ENCODE measurements at regions of chr10 and their contacts with region 1.

Region 1: GRCh38 chr10:67779465-67780203 is 58.4 kb downstream of the DNAJC12 start:
- DNase-seq: peak; percentile 73
- H3K4me3 ChIP-seq: no peak overlapping the region
- H3K27ac ChIP-seq: no peak overlapping the region
- H3K27me3 ChIP-seq: no peaks in the 10 kb centered on the region
- CTCF ChIP-seq: peak; percentile 82

Region 2: GRCh38 chr10:67306588-67307205 is 472.9 kb before region 1 on chr10:
- CTCF ChIA-PET with region 1: interaction called, 10 read pairs
- POLR2A ChIA-PET with region 1: no interaction called
- DNase-seq: no peak
- H3K4me3 ChIP-seq: no peak overlapping the region
- H3K27ac ChIP-seq: no peak overlapping the region
- H3K27me3 ChIP-seq: no peaks in the 10 kb centered on the region
- CTCF ChIP-seq: peak; percentile 64

Region 3: GRCh38 chr10:67327626-67328535 is 451.8 kb before region 1 on chr10:
- CTCF ChIA-PET with region 1: interaction called, 13 read pairs
- POLR2A ChIA-PET with region 1: no interaction called
- DNase-seq: no peak
- H3K4me3 ChIP-seq: no peak overlapping the region
- H3K27ac ChIP-seq: no peak overlapping the region
- H3K27me3 ChIP-seq: no peaks in the 10 kb centered on the region
- CTCF ChIP-seq: no peak

Region 4: DNA sequence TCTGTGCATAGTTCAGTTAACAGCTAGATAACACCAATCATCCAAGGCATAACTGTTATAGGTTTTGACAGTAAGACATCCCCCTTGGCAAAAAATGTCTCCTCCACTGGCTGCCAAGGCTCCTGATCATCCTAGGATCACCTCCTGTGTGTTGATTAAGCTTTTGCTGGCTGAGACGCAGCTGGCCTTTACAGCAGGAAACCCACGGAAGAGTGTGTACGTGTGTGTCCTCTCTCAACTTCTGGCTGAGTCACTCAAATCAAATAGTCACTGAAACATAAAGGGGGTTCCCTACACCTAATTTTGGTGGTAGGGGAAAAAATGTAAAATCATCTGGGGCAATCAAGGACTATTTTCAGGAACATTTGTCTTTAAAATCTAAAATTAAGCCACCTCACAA is 292.4 kb before region 1 on chr10:
- CTCF ChIA-PET with region 1: no interaction called
- POLR2A ChIA-PET with region 1: no interaction called
- DNase-seq: no peak
- H3K4me3 ChIP-seq: no peak overlapping the region
- H3K27ac ChIP-seq: no peak overlapping the region
- H3K27me3 ChIP-seq: no peaks in the 10 kb centered on the region
- CTCF ChIP-seq: no peak

Region 5: GRCh38 chr10:67520924-67521520 is 258.6 kb before region 1 on chr10:
- CTCF ChIA-PET with region 1: interaction called, 16 read pairs
- POLR2A ChIA-PET with region 1: no interaction called
- DNase-seq: peak; percentile 10
- H3K4me3 ChIP-seq: no peak overlapping the region
- H3K27ac ChIP-seq: no peak overlapping the region
- H3K27me3 ChIP-seq: no peaks in the 10 kb centered on the region
- CTCF ChIP-seq: peak; percentile 87

Region 6: GRCh38 chr10:67666416-67667034 is 113.1 kb before region 1 on chr10:
- CTCF ChIA-PET with region 1: interaction called, 87 read pairs
- POLR2A ChIA-PET with region 1: no interaction called
- DNase-seq: no peak
- H3K4me3 ChIP-seq: no peak overlapping the region
- H3K27ac ChIP-seq: no peak overlapping the region
- H3K27me3 ChIP-seq: no peaks in the 10 kb centered on the region
- CTCF ChIP-seq: peak; percentile 58

Region 7: GRCh38 chr10:67764012-67764822 is 15.4 kb before region 1 on chr10:
- CTCF ChIA-PET with region 1: interaction called, 53 read pairs
- POLR2A ChIA-PET with region 1: no interaction called
- DNase-seq: peak; percentile 87
- H3K4me3 ChIP-seq: peak overlapping the region; percentile 82
- H3K27ac ChIP-seq: peak overlapping the region; percentile 68
- H3K27me3 ChIP-seq: no peaks in the 10 kb centered on the region
- CTCF ChIP-seq: no peak

Region 8: DNA sequence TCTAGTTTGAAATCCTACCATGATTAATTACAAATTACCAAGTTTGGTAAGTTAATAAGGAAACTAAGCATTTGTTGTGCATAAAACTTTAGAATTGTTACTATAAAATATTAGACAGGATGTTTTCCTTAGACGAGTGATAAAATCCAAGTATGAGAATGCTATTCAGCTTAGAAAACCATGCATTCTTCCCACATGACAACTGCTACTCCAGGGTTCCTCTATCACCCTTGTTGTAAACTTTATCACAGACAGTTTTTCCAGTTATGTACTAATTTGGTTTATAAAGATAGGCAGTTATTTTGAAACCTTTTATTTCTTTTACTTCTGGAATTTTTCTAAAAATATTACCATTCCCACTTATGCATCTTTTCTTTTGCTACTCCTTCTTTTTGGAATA is 156.8 kb after region 1 on chr10:
- CTCF ChIA-PET with region 1: no interaction called
- POLR2A ChIA-PET with region 1: no interaction called
- DNase-seq: no peak
- H3K4me3 ChIP-seq: no peak overlapping the region
- H3K27ac ChIP-seq: no peak overlapping the region
- H3K27me3 ChIP-seq: no peaks in the 10 kb centered on the region
- CTCF ChIP-seq: no peak